Activated CD8-positive, alpha-beta T cell treated with anti-CD3 and anti-CD28 coated beads, Interleukin-2, amount 10 ng/mL, durations not matched to agents 7 days and 5 days (primary cell): ENCODE measurements at regions of chr13 and their contacts with region 1.

Region 1: GRCh38 chr13:41075034-41075433 is 13.7 kb downstream of the WBP4 start:
- DNase-seq: no peak
- ATAC-seq: no peak
- H3K4me3 Mint-ChIP-seq: no peak overlapping the region
- H3K27ac Mint-ChIP-seq: no peak overlapping the region
- H3K4me1 Mint-ChIP-seq: no peaks in the 10 kb centered on the region
- H3K27me3 Mint-ChIP-seq: no peaks in the 10 kb centered on the region

Region 2: GRCh38 chr13:41122838-41123237 is 47.8 kb after region 1 on chr13:
- CTCF ChIA-PET with region 1: no interaction called
- POLR2A ChIA-PET with region 1: no interaction called
- DNase-seq: no peak
- ATAC-seq: no peak
- H3K4me3 Mint-ChIP-seq: no peak overlapping the region
- H3K27ac Mint-ChIP-seq: no peak overlapping the region
- H3K4me1 Mint-ChIP-seq: no peaks in the 10 kb centered on the region
- H3K27me3 Mint-ChIP-seq: no peaks in the 10 kb centered on the region

Region 3: DNA sequence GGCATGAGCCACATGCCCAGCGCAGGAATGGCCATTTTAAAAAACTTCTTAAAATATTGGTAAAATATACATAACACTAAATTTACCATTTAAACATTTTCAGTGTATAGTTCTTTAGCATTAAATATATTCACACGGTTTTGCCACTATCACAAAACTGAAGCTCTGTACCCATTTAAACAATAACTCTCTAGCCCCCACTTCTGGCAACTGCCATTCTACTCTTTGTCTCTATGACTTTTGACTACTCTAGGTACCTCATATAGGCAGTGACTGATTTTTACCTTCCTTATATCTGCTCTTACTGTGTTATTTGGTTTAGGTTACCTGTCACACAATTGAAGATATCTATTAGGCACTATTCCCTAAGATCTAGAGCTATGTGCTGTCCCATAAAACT is 121.6 kb after region 1 on chr13:
- CTCF ChIA-PET with region 1: interaction called, 10 read pairs
- POLR2A ChIA-PET with region 1: no interaction called
- DNase-seq: no peak
- ATAC-seq: no peak
- H3K4me3 Mint-ChIP-seq: no peak overlapping the region
- H3K27ac Mint-ChIP-seq: no peak overlapping the region
- H3K4me1 Mint-ChIP-seq: peaks cover 32% of the 10 kb centered on the region
- H3K27me3 Mint-ChIP-seq: no peaks in the 10 kb centered on the region

Region 4: DNA sequence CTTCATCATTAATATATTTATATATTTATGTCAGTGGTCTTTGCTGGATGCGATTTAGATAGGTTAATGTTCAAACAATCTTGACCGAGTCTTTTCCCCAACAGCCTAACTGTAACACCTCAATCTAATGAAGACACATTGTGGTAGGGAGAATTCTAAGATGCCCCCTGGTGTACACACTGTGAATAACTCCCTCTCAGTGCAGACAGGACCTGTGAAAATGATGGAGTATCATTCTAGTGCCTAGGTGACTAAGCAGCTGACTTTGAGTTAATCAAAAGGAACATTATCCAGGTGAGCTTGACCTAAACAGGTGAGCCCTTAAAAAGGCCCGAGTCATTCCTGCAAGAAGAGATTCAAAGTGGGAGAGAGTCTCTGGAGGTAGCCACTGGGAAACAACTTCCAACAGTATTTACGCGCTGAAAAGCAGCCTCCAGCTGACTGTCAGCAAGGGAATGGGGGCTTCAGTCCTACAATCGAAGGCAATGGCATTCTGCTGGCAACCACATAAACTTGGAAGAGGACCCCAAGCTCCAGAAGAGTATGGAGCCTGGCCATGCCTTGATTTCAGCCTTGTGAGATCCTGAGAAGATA is 147.3 kb after region 1 on chr13:
- CTCF ChIA-PET with region 1: interaction called, 10 read pairs
- POLR2A ChIA-PET with region 1: no interaction called
- DNase-seq: peak; percentile 69
- ATAC-seq: peak; percentile 87
- H3K4me3 Mint-ChIP-seq: no peak overlapping the region
- H3K27ac Mint-ChIP-seq: no peak overlapping the region
- H3K4me1 Mint-ChIP-seq: no peaks in the 10 kb centered on the region
- H3K27me3 Mint-ChIP-seq: no peaks in the 10 kb centered on the region